ENCODE measurements at regions of chr2 and their contacts with region 1.

Region 1: GRCh38 chr2:186903216-186903615 is 54.2 kb upstream of the ZSWIM2 start:
- DNase-seq: peak; percentile 33
- H3K4me3 ChIP-seq: no peak overlapping the region
- H3K27ac ChIP-seq: no peak overlapping the region
- H3K4me1 ChIP-seq: peaks cover 6% of the 10 kb centered on the region
- H3K27me3 ChIP-seq: no peaks in the 10 kb centered on the region
- CTCF ChIP-seq: peak; percentile 65

Region 2: DNA sequence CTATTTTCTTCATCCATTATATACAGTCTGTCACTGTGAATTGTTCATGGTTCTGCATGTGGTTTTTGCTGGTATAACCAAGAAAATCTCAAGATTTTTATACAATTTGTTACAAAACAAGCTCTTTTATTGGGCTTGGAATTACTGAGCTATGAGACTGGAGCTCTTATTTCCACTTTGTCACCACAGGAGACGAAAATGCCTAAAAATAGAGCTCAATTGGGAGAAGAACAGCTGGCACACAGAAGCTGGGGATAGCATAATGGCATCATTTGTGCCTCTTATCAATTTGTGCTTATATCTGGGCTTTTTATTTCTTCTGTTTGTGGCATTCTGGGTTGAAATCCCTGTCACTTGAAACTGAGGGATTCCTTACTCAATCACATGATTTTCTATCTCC is 325.8 kb after region 1 on chr2:
- CTCF ChIA-PET with region 1: interaction called, 3 read pairs
- POLR2A ChIA-PET with region 1: interaction called, 15 read pairs
- intact Hi-C with region 1: no loop called
- DNase-seq: no peak
- H3K4me3 ChIP-seq: no peak overlapping the region
- H3K27ac ChIP-seq: no peak overlapping the region
- H3K4me1 ChIP-seq: no peaks in the 10 kb centered on the region
- H3K27me3 ChIP-seq: no peaks in the 10 kb centered on the region
- CTCF ChIP-seq: no peak

Region 3: GRCh38 chr2:188512456-188512855 is 1609.2 kb after region 1 on chr2:
- CTCF ChIA-PET with region 1: no interaction called
- POLR2A ChIA-PET with region 1: no interaction called
- intact Hi-C with region 1: no loop called
- DNase-seq: peak; percentile 78
- H3K4me3 ChIP-seq: no peak overlapping the region
- H3K27ac ChIP-seq: no peak overlapping the region
- H3K4me1 ChIP-seq: peaks cover 8% of the 10 kb centered on the region
- H3K27me3 ChIP-seq: no peaks in the 10 kb centered on the region
- CTCF ChIP-seq: peak; percentile 71